Activated B cell treated with CpG ODN at 0.5 μM for 24 hours (primary cell): ENCODE measurements at regions of chr5 and their contacts with region 1.

Region 1: GRCh38 chr5:177276886-177277285 is 26.6 kb downstream of the RAB24 start:
- DNase-seq: no peak
- ATAC-seq: no peak
- H3K4me3 Mint-ChIP-seq: no peak overlapping the region
- H3K27ac Mint-ChIP-seq: no peak overlapping the region
- H3K4me1 Mint-ChIP-seq: peaks cover 6% of the 10 kb centered on the region
- H3K27me3 Mint-ChIP-seq: no peaks in the 10 kb centered on the region
- CTCF ChIP-seq: no peak

Region 2: DNA sequence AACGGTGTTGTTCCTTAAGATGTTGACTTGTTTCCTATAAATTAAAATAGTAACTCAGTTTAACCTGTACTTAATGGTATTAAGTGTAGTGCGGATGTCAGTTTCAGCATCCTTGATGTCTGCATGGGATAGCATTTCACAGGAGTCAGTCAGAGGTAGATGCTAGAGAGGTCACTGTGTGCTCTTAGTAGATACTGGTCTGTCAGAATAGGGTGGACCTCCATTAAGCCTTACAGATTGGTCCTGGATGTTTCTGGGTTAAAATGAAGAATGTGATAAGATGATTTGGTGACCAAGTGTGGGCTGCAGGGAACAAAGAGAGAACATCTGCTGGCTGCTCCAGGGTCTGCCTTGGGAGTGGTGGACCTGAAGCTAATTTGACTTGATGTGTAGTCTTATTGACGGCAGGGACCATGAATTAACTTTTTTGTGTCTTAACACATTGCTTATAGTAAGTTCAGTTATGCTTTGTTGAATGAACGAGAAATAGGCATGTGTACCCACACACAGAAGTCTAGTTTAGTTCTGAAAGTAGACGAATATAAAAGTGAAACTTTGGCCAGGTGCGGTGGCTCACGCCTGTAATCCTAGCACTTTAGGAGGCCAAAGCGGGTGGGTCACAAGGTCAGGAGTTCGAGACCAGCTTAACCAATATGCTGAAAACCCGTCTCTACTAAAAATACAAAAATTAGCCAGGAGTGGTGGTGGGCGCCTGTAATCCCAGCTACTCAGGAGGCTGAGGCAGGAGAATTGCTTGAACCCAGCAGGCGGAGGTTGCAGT is 14.1 kb after region 1 on chr5:
- CTCF ChIA-PET with region 1: no interaction called
- POLR2A ChIA-PET with region 1: no interaction called
- intact Hi-C with region 1: loop called (anchors 1 kb)
- DNase-seq: no peak
- ATAC-seq: peak; percentile 63
- H3K4me3 Mint-ChIP-seq: peak overlapping the region; percentile 56
- H3K27ac Mint-ChIP-seq: peak overlapping the region; percentile 84
- H3K4me1 Mint-ChIP-seq: peaks cover 35% of the 10 kb centered on the region
- H3K27me3 Mint-ChIP-seq: no peaks in the 10 kb centered on the region
- CTCF ChIP-seq: no peak

Region 3: DNA sequence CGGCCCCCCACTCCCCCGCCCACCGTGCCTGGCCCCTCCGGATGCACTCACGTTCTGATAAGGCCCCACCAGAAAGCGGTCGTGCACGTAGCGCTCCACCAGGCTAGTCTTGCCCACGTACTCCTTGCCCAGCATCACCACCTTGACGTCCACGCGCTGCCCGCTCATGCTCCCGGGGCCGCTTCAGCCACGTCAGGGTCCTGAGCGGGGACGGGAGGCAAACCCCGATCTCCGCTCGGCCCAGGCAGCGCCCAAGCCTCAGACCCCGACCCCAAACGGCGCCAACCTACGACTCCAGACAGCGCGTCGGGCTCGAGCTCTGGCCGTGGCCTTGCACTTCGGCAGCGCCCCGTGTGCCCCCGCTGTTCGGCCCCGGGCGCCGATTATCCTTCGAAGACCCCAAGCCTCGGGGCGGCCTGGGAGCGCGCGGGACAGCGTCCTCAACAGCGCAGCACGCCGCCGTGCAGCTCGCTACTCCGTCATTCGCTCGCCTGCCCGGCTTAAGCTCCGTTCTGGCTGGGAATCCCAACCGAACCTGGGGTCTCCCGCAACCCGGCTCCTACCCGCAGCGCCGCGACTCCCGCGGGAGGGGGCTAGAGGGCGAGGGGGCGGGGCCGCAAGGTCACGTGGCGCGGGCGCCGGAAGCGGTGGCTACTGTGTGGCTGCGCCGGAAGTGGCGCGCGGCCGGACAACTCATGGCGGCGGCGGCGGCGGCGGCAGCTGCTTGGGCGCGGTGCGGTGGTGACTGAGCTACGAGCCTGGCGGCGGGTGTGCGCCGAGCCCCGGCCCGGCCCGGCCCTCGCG is 26.4 kb after region 1 on chr5 and contains the starts of genes PRELID1 and RAB24:
- CTCF ChIA-PET with region 1: no interaction called
- POLR2A ChIA-PET with region 1: no interaction called
- intact Hi-C with region 1: no loop called
- DNase-seq: peak; percentile 93
- ATAC-seq: peak; percentile 41
- H3K4me3 Mint-ChIP-seq: peak within 1 kb of the TSS; percentile 90
- H3K27ac Mint-ChIP-seq: peak within 1 kb of the TSS; percentile 89
- H3K4me1 Mint-ChIP-seq: peaks cover 75% of the 10 kb centered on the region
- H3K27me3 Mint-ChIP-seq: no peaks in the 10 kb centered on the region
- CTCF ChIP-seq: no peak
- total RNA-seq, gene PRELID1: 141 and 160 TPM in 2 replicates
- total RNA-seq, gene RAB24: 35.6 and 36.3 TPM in 2 replicates